Brain microvascular endothelial cell (primary cell): ENCODE measurements at regions of chr5 and their contacts with region 1.

Region 1: GRCh38 chr5:66796305-66797292 is 200.4 kb downstream of the MAST4 start:
- DNase-seq: peak; percentile 12
- H3K4me3 ChIP-seq: no peak overlapping the region
- H3K27ac ChIP-seq: no peak overlapping the region
- H3K27me3 ChIP-seq: no peaks in the 10 kb centered on the region
- CTCF ChIP-seq: peak; percentile 56

Region 2: GRCh38 chr5:66306105-66306843 is 490.3 kb before region 1 on chr5:
- in situ Hi-C with region 1: loop called (anchors 25 kb)
- DNase-seq: peak; percentile 64
- H3K4me3 ChIP-seq: no peak overlapping the region
- H3K27ac ChIP-seq: no peak overlapping the region
- H3K27me3 ChIP-seq: no peaks in the 10 kb centered on the region
- CTCF ChIP-seq: peak; percentile 94

Region 3: DNA sequence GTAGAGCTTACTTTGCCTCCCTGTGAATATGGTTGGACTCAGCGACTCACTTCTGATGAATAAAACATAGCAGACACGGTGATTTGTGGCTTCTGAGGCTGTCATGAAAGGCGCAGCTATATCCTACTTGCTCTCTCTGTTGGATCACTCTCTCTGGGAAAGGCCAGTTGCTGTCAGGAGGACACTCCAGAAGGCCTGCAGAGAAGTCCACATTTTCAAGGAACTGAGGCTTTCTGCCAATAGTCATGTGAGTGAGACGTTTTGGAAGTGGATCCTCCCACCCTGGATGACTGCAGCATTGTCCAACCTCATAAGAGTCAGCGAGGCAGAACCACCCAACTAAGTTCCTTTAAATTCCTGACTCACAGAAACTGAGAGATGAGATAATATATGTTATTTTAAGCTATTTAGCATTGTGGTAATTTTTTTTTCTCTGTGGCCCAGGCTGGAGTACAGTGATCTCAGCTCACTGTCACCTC is 356.4 kb before region 1 on chr5:
- in situ Hi-C with region 1: no loop called
- DNase-seq: peak; percentile 76
- H3K4me3 ChIP-seq: no peak overlapping the region
- H3K27ac ChIP-seq: no peak overlapping the region
- H3K27me3 ChIP-seq: no peaks in the 10 kb centered on the region
- CTCF ChIP-seq: no peak

Region 4: GRCh38 chr5:67215583-67216471 is 419.2 kb after region 1 on chr5:
- in situ Hi-C with region 1: no loop called
- DNase-seq: peak; percentile 28
- H3K4me3 ChIP-seq: no peak overlapping the region
- H3K27ac ChIP-seq: no peak overlapping the region
- H3K27me3 ChIP-seq: no peaks in the 10 kb centered on the region
- CTCF ChIP-seq: no peak